ENCODE measurements at regions of chr12 and their contacts with region 1.

Region 1: GRCh38 chr12:44812062-44812461 is 64.1 kb downstream of the NELL2 start:
- DNase-seq: peak in 27 of 35 experiments; percentile 16 to 83 (median 46)
- ATAC-seq: peak; percentile 70 to 85 (median 82)
- H3K4me3 ChIP-seq: no peak overlapping the region
- H3K4me3 Mint-ChIP-seq: no peak overlapping the region
- H3K27ac ChIP-seq: no peak overlapping the region
- H3K27ac Mint-ChIP-seq: peak overlapping the region; percentile 62 to 64
- H3K4me1 ChIP-seq: peaks cover 11 to 20% of the 10 kb centered on the region in 2 experiments
- H3K4me1 Mint-ChIP-seq: peaks cover 42 to 54% (median 53%) of the 10 kb centered on the region in 3 donors
- H3K27me3 ChIP-seq: no peaks in the 10 kb centered on the region
- H3K27me3 Mint-ChIP-seq: no peaks in the 10 kb centered on the region

Region 2: DNA sequence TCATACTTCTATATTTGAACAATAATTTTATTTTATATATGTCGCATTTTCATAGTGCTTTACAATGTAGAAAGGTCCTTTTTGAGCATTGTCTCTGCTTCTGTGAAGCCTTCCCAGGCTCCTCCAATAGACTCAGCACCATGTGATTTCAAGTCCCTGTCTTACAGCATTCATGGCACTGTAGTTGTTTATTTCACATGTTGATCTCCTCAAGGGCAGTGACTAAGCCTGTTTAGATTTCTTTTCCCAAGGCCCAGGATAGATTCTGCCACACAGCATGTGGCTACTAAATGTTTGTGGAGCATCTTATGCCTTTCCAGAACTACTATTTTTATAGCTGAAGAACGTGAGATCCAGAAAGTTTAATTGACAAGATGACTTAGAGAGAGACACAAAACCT is 584.4 kb before region 1 on chr12:
- CTCF ChIA-PET with region 1: no interaction called
- POLR2A ChIA-PET with region 1: no interaction called
- DNase-seq: no peak
- ATAC-seq: no peak
- H3K4me3 ChIP-seq: no peak overlapping the region
- H3K4me3 Mint-ChIP-seq: no peak overlapping the region
- H3K27ac ChIP-seq: no peak overlapping the region
- H3K27ac Mint-ChIP-seq: no peak overlapping the region
- H3K4me1 ChIP-seq: no peaks in the 10 kb centered on the region
- H3K4me1 Mint-ChIP-seq: no peaks in the 10 kb centered on the region
- H3K27me3 ChIP-seq: no peaks in the 10 kb centered on the region
- H3K27me3 Mint-ChIP-seq: no peaks in the 10 kb centered on the region

Region 3: GRCh38 chr12:44488180-44488579 is 323.9 kb before region 1 on chr12:
- CTCF ChIA-PET with region 1: no interaction called
- POLR2A ChIA-PET with region 1: no interaction called
- DNase-seq: no peak
- ATAC-seq: no peak
- H3K4me3 ChIP-seq: no peak overlapping the region
- H3K4me3 Mint-ChIP-seq: no peak overlapping the region
- H3K27ac ChIP-seq: no peak overlapping the region
- H3K27ac Mint-ChIP-seq: no peak overlapping the region
- H3K4me1 ChIP-seq: no peaks in the 10 kb centered on the region
- H3K4me1 Mint-ChIP-seq: no peaks in the 10 kb centered on the region
- H3K27me3 ChIP-seq: no peaks in the 10 kb centered on the region
- H3K27me3 Mint-ChIP-seq: peaks cover 6 to 11% of the 10 kb centered on the region in 2 donors

Region 4: DNA sequence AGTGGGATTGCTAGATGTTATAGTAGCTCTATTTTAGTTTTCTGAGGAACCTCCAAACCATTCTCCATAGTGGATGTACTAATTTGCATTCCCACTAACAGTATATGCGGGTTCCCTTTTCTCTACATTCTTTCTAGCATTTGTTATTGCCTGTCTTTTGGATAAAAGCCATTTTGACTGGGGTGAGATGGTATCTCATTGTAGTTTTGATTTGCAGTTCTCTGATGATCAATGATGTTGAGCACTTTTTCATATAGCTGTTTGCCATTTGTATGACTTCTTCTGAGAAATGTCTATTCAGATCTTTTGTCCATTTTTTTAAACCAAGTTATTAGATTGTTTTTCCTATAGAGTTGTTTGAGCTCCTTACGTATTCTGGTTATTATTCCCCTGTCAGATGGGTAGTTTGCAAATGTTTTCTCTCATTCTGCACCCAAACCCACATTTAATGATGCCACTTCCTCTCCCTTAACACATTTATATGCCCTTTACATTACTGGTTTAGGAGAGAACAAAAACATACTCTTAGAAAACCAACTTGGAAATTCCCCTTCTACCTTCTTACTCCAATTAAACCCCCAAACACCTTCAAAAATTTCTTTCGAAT is 15.9 kb after region 1 on chr12:
- CTCF ChIA-PET with region 1: interaction called, 3 to 11 read pairs
- POLR2A ChIA-PET with region 1: interaction called, 3 to 4 read pairs
- DNase-seq: peak in 3 of 35 experiments; percentile 15 to 81 (median 22)
- ATAC-seq: peak; percentile 84 to 94 (median 86)
- H3K4me3 ChIP-seq: peak overlapping the region in 1 of 2 donors; percentile 0
- H3K4me3 Mint-ChIP-seq: peak overlapping the region; percentile 61 to 73 (median 64)
- H3K27ac ChIP-seq: peak overlapping the region; percentile 56
- H3K27ac Mint-ChIP-seq: peak overlapping the region; percentile 95 to 98
- H3K4me1 ChIP-seq: peaks cover 17 to 28% of the 10 kb centered on the region in 2 experiments
- H3K4me1 Mint-ChIP-seq: peaks cover 44 to 75% (median 74%) of the 10 kb centered on the region in 3 donors
- H3K27me3 ChIP-seq: no peaks in the 10 kb centered on the region
- H3K27me3 Mint-ChIP-seq: no peaks in the 10 kb centered on the region

Region 5: GRCh38 chr12:45914090-45914489 is 1102.0 kb after region 1 on chr12:
- CTCF ChIA-PET with region 1: no interaction called
- POLR2A ChIA-PET with region 1: no interaction called
- DNase-seq: no peak
- ATAC-seq: peak; percentile 8 to 52 (median 28)
- H3K4me3 ChIP-seq: no peak overlapping the region
- H3K4me3 Mint-ChIP-seq: no peak overlapping the region
- H3K27ac ChIP-seq: no peak overlapping the region
- H3K27ac Mint-ChIP-seq: peak overlapping the region in 1 of 2 donors; percentile 18
- H3K4me1 ChIP-seq: no peaks in the 10 kb centered on the region
- H3K4me1 Mint-ChIP-seq: no peaks in the 10 kb centered on the region
- H3K27me3 ChIP-seq: no peaks in the 10 kb centered on the region
- H3K27me3 Mint-ChIP-seq: no peaks in the 10 kb centered on the region

Measured in T-cell (primary cell).